Activated CD8-positive, alpha-beta memory T cell treated with anti-CD3 and anti-CD28 coated beads, Interleukin-2, amount 10 ng/mL, durations not matched to agents 7 days and 5 days (primary cell): ENCODE measurements at regions of chr2 and their contacts with region 1.

Region 1: GRCh38 chr2:207625018-207625907 is at the start of gene METTL21A:
- DNase-seq: peak; percentile 95
- ATAC-seq: peak; percentile 80
- H3K4me3 Mint-ChIP-seq: peak within 1 kb of the TSS; percentile 88
- H3K27ac Mint-ChIP-seq: peak within 1 kb of the TSS; percentile 97
- H3K4me1 Mint-ChIP-seq: peaks cover 38% of the 10 kb centered on the region
- H3K27me3 Mint-ChIP-seq: no peaks in the 10 kb centered on the region
- total RNA-seq, gene METTL21A: 16.4 to 21.1 TPM

Region 2: DNA sequence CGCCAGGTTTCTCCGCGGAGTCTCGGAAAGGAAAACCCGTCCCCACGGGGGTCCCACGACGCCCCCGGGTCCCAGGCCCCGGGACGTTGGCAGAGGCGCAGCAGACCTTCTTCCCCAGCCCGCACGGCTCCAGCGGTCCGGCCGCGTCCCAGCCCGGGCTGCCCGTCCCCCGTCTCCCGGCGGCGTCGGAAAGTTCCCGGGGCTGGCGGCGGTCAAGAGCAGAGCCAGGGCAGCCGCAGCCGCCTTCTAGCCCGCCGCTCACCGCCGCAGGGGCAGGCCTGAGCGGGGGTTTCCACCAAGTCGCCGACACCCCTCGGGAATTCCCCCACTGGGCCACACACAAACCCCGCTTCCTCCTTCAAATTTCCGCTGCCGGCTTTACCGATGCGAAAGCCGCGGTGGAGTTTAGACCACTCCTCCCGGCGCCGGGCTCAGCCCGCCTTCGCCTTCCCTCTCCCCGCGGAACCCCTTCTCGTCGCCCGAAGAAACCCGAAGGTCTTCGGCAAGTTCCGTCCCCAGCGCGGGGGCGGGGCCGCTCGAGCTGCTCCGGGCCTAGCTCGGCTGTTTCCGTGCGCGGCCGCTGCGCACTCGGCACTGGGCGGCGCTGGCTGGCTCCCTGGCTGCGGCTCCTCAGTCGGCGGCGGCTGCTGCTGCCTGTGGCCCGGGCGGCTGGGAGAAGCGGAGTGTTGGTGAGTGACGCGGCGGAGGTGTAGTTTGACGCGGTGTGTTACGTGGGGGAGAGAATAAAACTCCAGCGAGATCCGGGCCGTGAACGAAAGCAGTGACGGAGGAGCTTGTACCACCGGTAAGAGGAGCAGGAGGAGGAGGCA is 95.7 kb before region 1 on chr2 and contains the start of gene CREB1:
- CTCF ChIA-PET with region 1: interaction called, 45 read pairs
- DNase-seq: peak; percentile 99
- ATAC-seq: peak; percentile 89
- H3K4me3 Mint-ChIP-seq: peak within 1 kb of the TSS; percentile 94
- H3K27ac Mint-ChIP-seq: peak within 1 kb of the TSS; percentile 99
- H3K4me1 Mint-ChIP-seq: peaks cover 48% of the 10 kb centered on the region
- H3K27me3 Mint-ChIP-seq: peaks cover 18% of the 10 kb centered on the region
- total RNA-seq, gene CREB1: 101 to 115 TPM

Region 3: GRCh38 chr2:207710814-207711740 is 85.8 kb after region 1 on chr2 and contains the start of gene CCNYL1:
- CTCF ChIA-PET with region 1: interaction called, 17 read pairs
- DNase-seq: peak; percentile 99
- ATAC-seq: peak; percentile 99
- H3K4me3 Mint-ChIP-seq: peak within 1 kb of the TSS; percentile 91
- H3K27ac Mint-ChIP-seq: peak within 1 kb of the TSS; percentile 90
- H3K4me1 Mint-ChIP-seq: peaks cover 20% of the 10 kb centered on the region
- H3K27me3 Mint-ChIP-seq: peaks cover 5% of the 10 kb centered on the region
- total RNA-seq, gene CCNYL1: 5.8 to 5.9 TPM

Region 4: GRCh38 chr2:208025037-208025813 is 400.0 kb after region 1 on chr2 and contains the start of gene PLEKHM3:
- CTCF ChIA-PET with region 1: interaction called, 10 read pairs
- DNase-seq: peak; percentile 85
- ATAC-seq: peak; percentile 95
- H3K4me3 Mint-ChIP-seq: peak within 1 kb of the TSS; percentile 87
- H3K27ac Mint-ChIP-seq: peak within 1 kb of the TSS; percentile 87
- H3K4me1 Mint-ChIP-seq: peaks cover 16% of the 10 kb centered on the region
- H3K27me3 Mint-ChIP-seq: peaks cover 2% of the 10 kb centered on the region
- total RNA-seq, gene PLEKHM3: 4.7 to 5.1 TPM

Region 5: GRCh38 chr2:208040199-208041171 is 415.2 kb after region 1 on chr2:
- CTCF ChIA-PET with region 1: interaction called, 18 read pairs
- DNase-seq: peak; percentile 83
- ATAC-seq: peak; percentile 85
- H3K4me3 Mint-ChIP-seq: no peak overlapping the region
- H3K27ac Mint-ChIP-seq: no peak overlapping the region
- H3K4me1 Mint-ChIP-seq: peaks cover 2% of the 10 kb centered on the region
- H3K27me3 Mint-ChIP-seq: peaks cover 11% of the 10 kb centered on the region